ENCODE measurements at regions of chr4 and their contacts with region 1.

Region 1: DNA sequence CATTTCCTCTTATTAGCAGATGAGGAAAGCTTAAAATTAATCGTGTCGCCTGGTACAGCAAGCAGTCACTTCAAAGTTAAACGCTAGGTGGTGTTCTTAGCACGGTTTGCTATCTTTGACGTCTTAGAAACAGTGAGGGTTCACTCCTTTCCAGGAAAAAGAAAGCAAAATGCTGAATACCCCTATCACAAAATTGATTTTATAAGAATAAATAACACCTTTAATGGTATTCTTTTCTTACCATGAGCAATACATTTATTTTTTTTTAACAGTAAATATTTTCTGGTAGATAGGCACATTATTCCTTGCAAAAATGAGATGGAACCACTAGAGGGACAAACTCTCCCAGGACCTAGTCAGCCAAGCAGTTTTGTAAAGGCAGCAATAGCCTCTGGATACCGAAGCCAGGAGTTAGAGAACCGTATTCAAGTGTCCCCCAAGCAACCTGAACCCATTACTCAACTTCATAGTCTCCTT is 153.9 kb downstream of the KDR start:
- DNase-seq: peak in 1 of 2 donors; percentile 51
- ATAC-seq: peak in 2 of 3 donors; percentile 75 to 79
- H3K4me3 ChIP-seq: no peak overlapping the region
- H3K4me3 Mint-ChIP-seq: no peak overlapping the region
- H3K27ac ChIP-seq: no peak overlapping the region
- H3K27ac Mint-ChIP-seq: no peak overlapping the region
- H3K4me1 ChIP-seq: no peaks in the 10 kb centered on the region
- H3K4me1 Mint-ChIP-seq: no peaks in the 10 kb centered on the region
- H3K27me3 ChIP-seq: no peaks in the 10 kb centered on the region
- H3K27me3 Mint-ChIP-seq: peaks cover 0 to 4% of the 10 kb centered on the region in 2 donors
- CTCF ChIP-seq: peak; percentile 67

Region 2: GRCh38 chr4:55078987-55079386 is 107.5 kb after region 1 on chr4:
- intact Hi-C with region 1: no loop called
- DNase-seq: no peak
- ATAC-seq: no peak
- H3K4me3 ChIP-seq: no peak overlapping the region
- H3K4me3 Mint-ChIP-seq: no peak overlapping the region
- H3K27ac ChIP-seq: no peak overlapping the region
- H3K27ac Mint-ChIP-seq: no peak overlapping the region
- H3K4me1 ChIP-seq: no peaks in the 10 kb centered on the region
- H3K4me1 Mint-ChIP-seq: peaks cover 6 to 7% of the 10 kb centered on the region in 2 donors
- H3K27me3 ChIP-seq: no peaks in the 10 kb centered on the region
- H3K27me3 Mint-ChIP-seq: peaks cover 0 to 8% of the 10 kb centered on the region in 2 donors
- CTCF ChIP-seq: no peak

Region 3: DNA sequence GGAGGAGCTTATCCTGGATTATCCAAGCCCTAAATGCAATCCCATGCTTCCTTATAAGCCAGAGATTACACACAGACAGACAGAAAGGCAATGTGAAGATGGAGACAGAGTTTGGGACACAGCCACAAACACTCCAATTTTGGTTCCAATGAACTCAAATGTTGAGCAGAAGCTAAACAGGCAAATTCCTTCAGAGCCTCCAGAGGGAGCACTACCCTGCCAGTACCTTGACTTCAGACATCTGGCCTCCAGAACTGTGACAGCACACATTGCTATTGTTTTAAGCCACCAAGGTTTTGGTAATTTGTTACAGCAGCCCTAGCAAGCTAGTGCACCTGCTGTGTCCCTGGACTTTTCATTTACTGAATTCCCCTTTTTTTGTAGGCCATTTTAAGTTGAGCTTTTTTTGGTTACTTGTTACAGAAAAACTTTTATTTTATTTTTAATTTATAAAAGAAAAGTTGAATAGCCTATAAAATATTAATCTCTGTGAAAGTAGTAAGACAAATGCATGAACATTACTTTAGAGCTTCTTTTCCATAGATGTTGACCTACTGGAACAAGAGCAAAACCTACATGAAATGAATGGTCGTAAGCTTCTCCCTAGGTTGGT is 341.1 kb after region 1 on chr4:
- intact Hi-C with region 1: loop called (anchors 5 kb)
- DNase-seq: peak in 1 of 2 donors; percentile 69
- ATAC-seq: peak in 2 of 3 donors; percentile 68 to 70
- H3K4me3 ChIP-seq: no peak overlapping the region
- H3K4me3 Mint-ChIP-seq: no peak overlapping the region
- H3K27ac ChIP-seq: no peak overlapping the region
- H3K27ac Mint-ChIP-seq: no peak overlapping the region
- H3K4me1 ChIP-seq: no peaks in the 10 kb centered on the region
- H3K4me1 Mint-ChIP-seq: no peaks in the 10 kb centered on the region
- H3K27me3 ChIP-seq: no peaks in the 10 kb centered on the region
- H3K27me3 Mint-ChIP-seq: peaks cover 0 to 5% of the 10 kb centered on the region in 2 donors
- CTCF ChIP-seq: peak; percentile 54

Region 4: GRCh38 chr4:55554453-55555030 is 583.0 kb after region 1 on chr4:
- intact Hi-C with region 1: loop called (anchors 10 kb)
- DNase-seq: peak in 1 of 2 donors; percentile 69
- ATAC-seq: peak in 2 of 3 donors; percentile 35 to 39
- H3K4me3 ChIP-seq: no peak overlapping the region
- H3K4me3 Mint-ChIP-seq: no peak overlapping the region
- H3K27ac ChIP-seq: no peak overlapping the region
- H3K27ac Mint-ChIP-seq: no peak overlapping the region
- H3K4me1 ChIP-seq: no peaks in the 10 kb centered on the region
- H3K4me1 Mint-ChIP-seq: no peaks in the 10 kb centered on the region
- H3K27me3 ChIP-seq: no peaks in the 10 kb centered on the region
- H3K27me3 Mint-ChIP-seq: peaks cover 23 to 35% of the 10 kb centered on the region in 2 donors
- CTCF ChIP-seq: peak; percentile 30

Region 5: GRCh38 chr4:55736605-55737183 is 765.2 kb after region 1 on chr4:
- intact Hi-C with region 1: loop called (anchors 10 kb)
- DNase-seq: peak in 1 of 2 donors; percentile 24
- ATAC-seq: no peak
- H3K4me3 ChIP-seq: no peak overlapping the region
- H3K4me3 Mint-ChIP-seq: no peak overlapping the region
- H3K27ac ChIP-seq: no peak overlapping the region
- H3K27ac Mint-ChIP-seq: no peak overlapping the region
- H3K4me1 ChIP-seq: no peaks in the 10 kb centered on the region
- H3K4me1 Mint-ChIP-seq: no peaks in the 10 kb centered on the region
- H3K27me3 ChIP-seq: no peaks in the 10 kb centered on the region
- H3K27me3 Mint-ChIP-seq: peaks cover 21 to 60% of the 10 kb centered on the region in 2 donors
- CTCF ChIP-seq: peak; percentile 5

Region 6: GRCh38 chr4:55866973-55867574 is 895.6 kb after region 1 on chr4:
- intact Hi-C with region 1: loop called (anchors 10 kb)
- DNase-seq: peak in 1 of 2 donors; percentile 73
- ATAC-seq: peak; percentile 87 to 93 (median 88)
- H3K4me3 ChIP-seq: no peak overlapping the region
- H3K4me3 Mint-ChIP-seq: no peak overlapping the region
- H3K27ac ChIP-seq: no peak overlapping the region
- H3K27ac Mint-ChIP-seq: peak overlapping the region; percentile 45 to 83
- H3K4me1 ChIP-seq: no peaks in the 10 kb centered on the region
- H3K4me1 Mint-ChIP-seq: peaks cover 10 to 11% of the 10 kb centered on the region in 2 donors
- H3K27me3 ChIP-seq: no peaks in the 10 kb centered on the region
- H3K27me3 Mint-ChIP-seq: no peaks in the 10 kb centered on the region
- CTCF ChIP-seq: peak; percentile 91